ENCODE measurements at regions of chr13 and their contacts with region 1.

Region 1: DNA sequence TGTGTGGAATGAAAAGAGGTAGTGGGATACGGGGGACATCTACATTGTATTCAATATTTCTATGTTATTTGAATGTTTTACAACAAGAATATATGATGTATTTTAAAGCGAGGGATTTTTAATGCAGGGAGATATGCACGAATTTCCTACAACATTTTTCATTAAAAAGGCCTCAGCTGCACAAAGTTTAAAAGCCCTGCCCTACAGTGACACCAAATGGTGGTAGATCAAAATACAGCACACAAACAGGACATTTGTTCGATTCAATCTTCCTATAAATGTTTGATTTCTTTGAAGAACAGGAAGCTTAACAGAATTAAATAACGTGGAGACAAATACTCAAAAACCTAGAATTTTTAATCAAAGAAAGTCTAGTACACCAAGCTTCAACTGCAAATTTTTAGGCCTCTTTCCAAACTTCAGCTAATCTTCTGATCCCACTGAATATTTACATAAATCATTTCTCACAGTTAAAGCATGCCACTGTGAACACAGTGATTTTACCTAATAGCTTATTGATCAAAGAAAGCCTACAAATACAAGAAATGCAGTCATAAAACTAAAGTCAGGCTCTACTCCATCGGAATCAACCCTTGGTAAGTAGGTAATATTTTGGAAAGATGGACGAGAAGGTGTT is 257.2 kb downstream of the DIAPH3 start:
- DNase-seq: no peak
- ATAC-seq: no peak
- H3K4me3 ChIP-seq: no peak overlapping the region
- H3K27ac ChIP-seq: no peak overlapping the region
- H3K4me1 ChIP-seq: no peaks in the 10 kb centered on the region
- H3K27me3 ChIP-seq: no peaks in the 10 kb centered on the region
- CTCF ChIP-seq: peak; percentile 54; the same call in 1 of the 2 replicates

Region 2: DNA sequence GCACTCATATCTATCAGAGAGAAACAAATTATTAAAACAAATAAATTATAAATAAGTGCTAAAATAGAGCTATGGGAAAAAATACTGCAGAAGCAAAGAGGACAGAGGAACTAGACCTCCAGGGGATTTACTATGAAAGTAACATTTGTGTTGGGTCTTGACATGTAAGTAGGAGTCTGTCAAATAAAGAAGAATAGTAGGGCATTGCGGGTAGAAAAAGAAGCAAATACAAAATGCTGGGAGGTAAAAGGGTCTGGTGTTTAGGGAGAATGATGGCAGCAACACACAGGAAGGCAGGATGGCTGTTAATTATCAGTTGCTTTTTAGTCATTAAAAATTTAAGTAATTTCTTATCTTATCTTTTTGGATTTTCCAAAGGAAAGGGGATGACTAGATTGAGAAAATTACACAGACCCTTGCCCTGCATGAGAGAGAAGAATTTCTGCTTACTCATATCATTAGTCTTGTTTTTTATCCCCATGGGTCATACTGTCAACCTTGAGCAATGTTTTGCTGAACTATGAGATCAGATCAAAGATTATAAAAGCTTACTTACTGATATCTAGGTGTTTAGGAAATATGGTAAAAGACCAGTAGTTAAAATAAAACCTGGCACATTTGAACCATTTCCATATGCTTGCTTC is 215.6 kb before region 1 on chr13:
- CTCF ChIA-PET with region 1: interaction called, 10 read pairs
- POLR2A ChIA-PET with region 1: no interaction called
- in situ Hi-C with region 1: no loop called
- intact Hi-C with region 1: no loop called
- DNase-seq: no peak
- ATAC-seq: no peak
- H3K4me3 ChIP-seq: no peak overlapping the region
- H3K27ac ChIP-seq: no peak overlapping the region
- H3K4me1 ChIP-seq: no peaks in the 10 kb centered on the region
- H3K27me3 ChIP-seq: no peaks in the 10 kb centered on the region
- CTCF ChIP-seq: no peak

Measured in Panc1 (cell line).